Activated CD8-positive, alpha-beta memory T cell treated with anti-CD3 and anti-CD28 coated beads, Interleukin-2, amount 10 ng/mL, durations not matched to agents 7 days and 5 days (primary cell): ENCODE measurements at regions of chr12 and their contacts with region 1.

Region 1: GRCh38 chr12:69341328-69341727 is 6.9 kb upstream of the LYZ start:
- DNase-seq: no peak
- ATAC-seq: no peak
- H3K4me3 Mint-ChIP-seq: no peak overlapping the region
- H3K27ac Mint-ChIP-seq: no peak overlapping the region
- H3K4me1 Mint-ChIP-seq: no peaks in the 10 kb centered on the region
- H3K27me3 Mint-ChIP-seq: no peaks in the 10 kb centered on the region

Region 2: GRCh38 chr12:69015841-69016240 is 325.5 kb before region 1 on chr12:
- CTCF ChIA-PET with region 1: no interaction called
- DNase-seq: no peak
- ATAC-seq: no peak
- H3K4me3 Mint-ChIP-seq: no peak overlapping the region
- H3K27ac Mint-ChIP-seq: no peak overlapping the region
- H3K4me1 Mint-ChIP-seq: no peaks in the 10 kb centered on the region
- H3K27me3 Mint-ChIP-seq: peaks cover 13% of the 10 kb centered on the region

Region 3: DNA sequence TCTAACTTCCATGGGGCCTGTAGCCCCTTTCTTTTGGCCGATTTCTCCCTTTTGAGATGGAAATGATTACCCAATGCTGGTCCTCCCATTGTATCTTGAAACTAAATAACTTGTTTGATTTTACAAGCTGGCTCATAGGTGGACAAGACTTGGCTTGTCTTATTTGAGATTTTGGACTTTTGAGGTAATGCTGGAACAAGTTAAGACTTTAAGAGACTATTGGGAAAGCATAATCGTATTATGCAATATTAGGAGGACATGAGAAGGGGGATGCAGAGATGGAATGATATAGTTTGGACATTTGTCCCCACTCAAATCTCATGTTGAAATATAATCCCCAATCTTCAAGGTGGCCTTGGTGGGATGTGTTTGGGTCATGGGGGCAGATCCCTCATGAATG is 42.4 kb before region 1 on chr12:
- CTCF ChIA-PET with region 1: no interaction called
- DNase-seq: no peak
- ATAC-seq: no peak
- H3K4me3 Mint-ChIP-seq: no peak overlapping the region
- H3K27ac Mint-ChIP-seq: no peak overlapping the region
- H3K4me1 Mint-ChIP-seq: no peaks in the 10 kb centered on the region
- H3K27me3 Mint-ChIP-seq: peaks cover 27% of the 10 kb centered on the region

Region 4: DNA sequence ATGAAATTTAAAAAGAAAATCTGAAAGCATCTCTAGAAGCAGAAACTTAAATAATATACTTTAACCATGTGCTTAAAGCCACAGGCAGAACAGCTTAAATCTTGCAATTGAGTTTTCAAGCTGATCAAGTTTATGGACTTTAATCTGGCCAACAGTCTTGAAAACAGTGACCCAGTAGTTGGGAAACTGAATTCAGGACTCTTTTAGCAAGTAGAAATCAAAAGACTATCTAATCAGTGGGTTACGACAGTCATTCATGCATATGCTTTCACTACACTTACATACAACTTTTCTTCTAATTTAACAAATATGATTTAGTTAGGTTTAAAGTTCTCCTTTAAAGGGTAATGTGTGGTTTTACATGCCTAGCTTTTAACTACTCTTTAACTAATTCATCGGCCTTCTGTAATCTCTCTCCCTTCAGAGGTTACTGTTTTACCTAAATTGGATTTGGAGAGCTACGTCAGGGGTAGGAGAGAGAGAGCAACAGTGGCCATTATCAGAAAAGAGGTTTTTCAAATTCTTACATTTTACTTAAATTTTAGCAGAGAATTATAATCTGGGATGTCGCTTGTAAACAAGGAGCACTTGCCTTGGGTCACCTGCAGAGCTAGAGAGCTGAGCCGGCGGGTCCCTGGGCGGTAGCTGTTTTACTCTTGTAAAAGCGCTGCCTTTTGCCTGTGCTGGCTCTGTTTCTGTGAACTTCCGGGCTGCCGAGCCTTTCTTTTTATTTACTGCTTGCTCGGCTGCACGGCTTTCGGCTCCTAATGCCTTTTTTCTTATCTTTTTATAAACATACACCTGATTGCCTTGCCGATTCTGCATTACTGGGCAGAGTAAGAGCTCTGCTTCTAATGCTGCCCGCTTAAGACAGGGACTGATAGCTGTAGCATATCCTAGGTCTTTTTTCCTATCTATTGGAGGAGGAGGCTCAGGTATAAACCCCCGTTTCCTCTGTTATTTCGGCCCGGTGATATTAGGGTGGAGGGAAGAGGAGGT is 10.6 kb before region 1 on chr12:
- CTCF ChIA-PET with region 1: interaction called, 10 read pairs
- DNase-seq: peak; percentile 74
- ATAC-seq: peak; percentile 85
- H3K4me3 Mint-ChIP-seq: peak overlapping the region; percentile 76
- H3K27ac Mint-ChIP-seq: peak overlapping the region; percentile 92
- H3K4me1 Mint-ChIP-seq: peaks cover 34% of the 10 kb centered on the region
- H3K27me3 Mint-ChIP-seq: no peaks in the 10 kb centered on the region